B cell (primary cell): ENCODE measurements at regions of chr22 and their contacts with region 1.

Region 1: GRCh38 chr22:41800348-41801146 is at the start of gene CCDC134:
- DNase-seq: peak; percentile 91
- ATAC-seq: peak; percentile 98
- H3K4me3 ChIP-seq: peak within 1 kb of the TSS; percentile 65 to 98 (median 96)
- H3K4me3 Mint-ChIP-seq: peak within 1 kb of the TSS; percentile 98
- H3K27ac ChIP-seq: peak within 1 kb of the TSS; percentile 90 to 91
- H3K27ac Mint-ChIP-seq: peak within 1 kb of the TSS; percentile 99
- H3K4me1 ChIP-seq: peaks cover 19 to 22% of the 10 kb centered on the region in 2 donors
- H3K4me1 Mint-ChIP-seq: peaks cover 24% of the 10 kb centered on the region
- H3K27me3 ChIP-seq: no peaks in the 10 kb centered on the region
- H3K27me3 Mint-ChIP-seq: no peaks in the 10 kb centered on the region
- CTCF ChIP-seq: no peak
- total RNA-seq, gene CCDC134: 17.4 and 18.1 TPM in 2 replicates

Region 2: GRCh38 chr22:41367039-41367679 is 433.4 kb before region 1 on chr22:
- CTCF ChIA-PET with region 1: no interaction called
- POLR2A ChIA-PET with region 1: no interaction called
- intact Hi-C with region 1: no loop called
- DNase-seq: no peak
- ATAC-seq: no peak
- H3K4me3 ChIP-seq: no peak overlapping the region
- H3K4me3 Mint-ChIP-seq: no peak overlapping the region
- H3K27ac ChIP-seq: no peak overlapping the region
- H3K27ac Mint-ChIP-seq: no peak overlapping the region
- H3K4me1 ChIP-seq: no peaks in the 10 kb centered on the region
- H3K4me1 Mint-ChIP-seq: no peaks in the 10 kb centered on the region
- H3K27me3 ChIP-seq: peaks cover 0 to 11% (median 0%) of the 10 kb centered on the region in 4 experiments
- H3K27me3 Mint-ChIP-seq: peaks cover 4% of the 10 kb centered on the region
- CTCF ChIP-seq: no peak

Region 3: DNA sequence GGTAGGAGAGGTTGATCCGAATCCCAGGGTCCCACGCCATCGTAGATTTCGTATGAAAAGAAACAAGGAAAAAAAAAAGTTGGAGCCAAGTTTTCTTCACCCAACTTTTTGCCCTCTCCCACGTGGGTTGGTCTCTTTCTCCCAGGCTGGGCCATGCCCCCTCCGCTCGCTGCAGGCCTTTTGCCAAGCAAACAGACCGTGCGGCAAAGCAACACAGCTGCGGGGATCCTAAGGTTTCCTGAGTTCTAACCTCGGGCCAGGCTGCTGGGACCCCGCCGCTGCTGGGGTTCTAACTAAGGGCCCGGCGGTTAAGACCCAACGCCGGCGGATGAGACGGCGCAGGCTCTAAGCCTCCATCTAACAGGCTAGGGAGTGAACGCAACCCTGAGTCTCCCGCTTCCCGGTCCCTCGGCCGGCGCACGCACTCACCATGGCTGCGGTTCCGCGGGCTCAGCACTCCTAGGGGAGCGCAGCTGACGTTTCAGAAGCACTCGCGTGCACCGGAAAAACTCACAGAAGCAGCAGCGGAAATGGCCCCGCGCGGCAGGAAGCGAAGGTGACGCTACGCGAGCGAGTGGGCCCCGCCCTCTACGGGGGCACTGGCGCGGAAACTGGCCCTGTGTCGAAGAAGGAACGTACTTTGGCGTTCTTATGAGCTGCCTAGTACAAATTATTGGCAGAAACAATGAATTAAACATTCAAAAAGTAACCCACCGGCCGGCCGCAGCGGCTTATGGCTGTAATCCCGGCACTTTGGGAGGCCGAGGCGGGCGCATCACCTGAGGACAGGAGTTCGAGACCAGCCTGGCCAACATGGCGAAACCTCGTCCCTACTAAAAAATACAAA is 112.0 kb before region 1 on chr22 and contains the start of gene SNU13:
- CTCF ChIA-PET with region 1: no interaction called
- POLR2A ChIA-PET with region 1: no interaction called
- intact Hi-C with region 1: loop called (anchors 2 kb)
- DNase-seq: peak; percentile 96
- ATAC-seq: peak; percentile 91
- H3K4me3 ChIP-seq: peak within 1 kb of the TSS; percentile 74 to 99 (median 96)
- H3K4me3 Mint-ChIP-seq: peak within 1 kb of the TSS; percentile 91
- H3K27ac ChIP-seq: peak within 1 kb of the TSS; percentile 92 to 96
- H3K27ac Mint-ChIP-seq: peak within 1 kb of the TSS; percentile 97
- H3K4me1 ChIP-seq: peaks cover 10 to 23% of the 10 kb centered on the region in 2 donors
- H3K4me1 Mint-ChIP-seq: peaks cover 31% of the 10 kb centered on the region
- H3K27me3 ChIP-seq: no peaks in the 10 kb centered on the region
- H3K27me3 Mint-ChIP-seq: no peaks in the 10 kb centered on the region
- CTCF ChIP-seq: no peak
- total RNA-seq, gene SNU13: 108 and 114 TPM in 2 replicates

Region 4: DNA sequence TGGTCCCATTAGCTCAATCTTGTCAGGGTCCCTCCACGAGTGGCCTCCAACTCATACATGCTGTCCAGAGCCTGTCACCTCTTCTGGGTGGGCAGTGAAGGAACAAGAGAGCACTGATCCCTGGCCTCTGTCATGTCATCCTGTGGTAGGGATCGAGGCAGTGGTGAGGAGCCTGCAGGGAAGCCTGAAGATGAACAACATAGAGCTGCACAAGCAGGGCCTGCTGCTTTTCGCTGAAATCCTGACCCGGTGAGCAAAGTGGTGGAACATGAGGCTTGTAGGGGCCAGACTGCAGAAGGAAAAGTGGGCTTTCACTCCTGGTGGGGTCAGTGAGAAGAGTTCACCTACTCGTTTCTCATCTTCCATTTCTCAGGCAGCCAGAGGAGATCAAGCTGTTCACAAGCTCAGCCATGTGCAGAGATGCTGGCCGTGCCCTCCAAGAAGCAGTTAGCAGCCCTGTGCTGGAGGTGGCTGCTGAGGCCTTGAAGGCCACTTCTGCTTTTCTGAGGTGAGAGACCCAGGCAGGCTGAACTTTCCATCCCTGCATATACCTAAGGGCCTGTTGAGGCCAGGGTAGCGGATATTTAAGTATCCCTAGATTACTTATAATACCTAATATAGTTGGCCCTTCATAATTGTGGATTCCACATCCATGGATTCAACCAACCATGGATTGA is 68.3 kb before region 1 on chr22:
- CTCF ChIA-PET with region 1: no interaction called
- POLR2A ChIA-PET with region 1: no interaction called
- intact Hi-C with region 1: no loop called
- DNase-seq: peak; percentile 50
- ATAC-seq: peak; percentile 74
- H3K4me3 ChIP-seq: no peak overlapping the region
- H3K4me3 Mint-ChIP-seq: no peak overlapping the region
- H3K27ac ChIP-seq: no peak overlapping the region
- H3K27ac Mint-ChIP-seq: peak overlapping the region; percentile 17
- H3K4me1 ChIP-seq: peaks cover 4 to 6% of the 10 kb centered on the region in 2 donors
- H3K4me1 Mint-ChIP-seq: peaks cover 6% of the 10 kb centered on the region
- H3K27me3 ChIP-seq: no peaks in the 10 kb centered on the region
- H3K27me3 Mint-ChIP-seq: no peaks in the 10 kb centered on the region
- CTCF ChIP-seq: no peak

Region 5: GRCh38 chr22:41780746-41781505 is 19.6 kb before region 1 on chr22:
- CTCF ChIA-PET with region 1: interaction called, 43 read pairs
- POLR2A ChIA-PET with region 1: interaction called, 68 read pairs
- intact Hi-C with region 1: loop called (anchors 1 kb)
- DNase-seq: peak; percentile 94
- ATAC-seq: peak; percentile 96
- H3K4me3 ChIP-seq: peak overlapping the region; percentile 47 to 76 (median 60)
- H3K4me3 Mint-ChIP-seq: peak overlapping the region; percentile 88
- H3K27ac ChIP-seq: peak overlapping the region; percentile 90 to 95
- H3K27ac Mint-ChIP-seq: peak overlapping the region; percentile 98
- H3K4me1 ChIP-seq: peaks cover 26 to 31% of the 10 kb centered on the region in 2 donors
- H3K4me1 Mint-ChIP-seq: peaks cover 37% of the 10 kb centered on the region
- H3K27me3 ChIP-seq: no peaks in the 10 kb centered on the region
- H3K27me3 Mint-ChIP-seq: no peaks in the 10 kb centered on the region
- CTCF ChIP-seq: no peak